B cell (primary cell): ENCODE measurements at regions of chr3 and their contacts with region 1.

Region 1: DNA sequence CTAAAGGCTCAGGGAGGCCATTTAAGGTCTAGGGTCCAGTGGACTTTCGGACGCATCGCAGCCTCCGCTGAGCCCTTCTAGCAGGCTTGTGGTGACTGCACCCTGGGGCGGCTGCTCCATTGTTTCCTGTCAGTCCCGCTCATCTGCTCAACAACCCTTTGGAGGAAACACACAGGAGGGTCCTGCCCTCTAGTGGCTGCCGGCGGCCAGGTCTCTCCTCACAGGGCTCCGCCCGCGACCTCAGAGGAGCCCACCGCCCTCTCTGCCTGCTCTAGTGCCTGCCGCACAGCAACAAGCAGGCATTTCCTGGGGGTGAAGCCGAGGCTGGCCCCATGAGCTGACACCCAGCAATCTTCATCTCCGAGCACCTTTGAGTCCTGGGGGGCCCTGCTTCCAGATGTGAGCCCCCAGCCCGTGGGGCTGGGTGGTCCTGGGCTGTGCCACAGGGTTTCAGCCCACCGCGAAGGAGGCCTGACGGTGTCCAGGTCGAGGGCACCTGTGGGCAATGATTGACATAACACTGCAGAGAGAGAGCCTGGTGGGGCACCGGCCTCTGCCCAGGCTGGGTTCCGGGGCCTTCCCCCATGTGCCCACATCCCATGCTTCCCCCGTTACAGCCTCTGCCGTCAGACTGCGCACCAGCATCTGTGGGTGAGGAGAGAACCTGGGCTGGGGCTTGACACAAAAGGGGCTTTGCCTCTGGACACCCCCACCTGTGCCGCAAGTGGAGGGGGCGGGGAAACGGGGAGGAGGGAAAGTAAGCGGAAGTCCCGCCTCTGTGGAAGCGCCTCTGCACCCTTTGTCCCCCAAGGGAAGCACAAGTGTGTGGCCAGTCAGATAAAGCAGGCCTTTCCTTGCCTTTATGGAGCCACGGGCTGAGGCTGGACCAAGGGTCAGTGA is 27.0 kb upstream of the SFMBT1 start:
- DNase-seq: peak; percentile 86
- ATAC-seq: peak; percentile 91
- H3K4me3 ChIP-seq: peak overlapping the region; percentile 50 to 91 (median 80)
- H3K4me3 Mint-ChIP-seq: peak overlapping the region; percentile 95
- H3K27ac ChIP-seq: peak overlapping the region; percentile 34 to 76
- H3K27ac Mint-ChIP-seq: peak overlapping the region; percentile 90
- H3K4me1 ChIP-seq: peaks cover 12 to 21% of the 10 kb centered on the region in 2 donors
- H3K4me1 Mint-ChIP-seq: peaks cover 17% of the 10 kb centered on the region
- H3K27me3 ChIP-seq: no peaks in the 10 kb centered on the region
- H3K27me3 Mint-ChIP-seq: no peaks in the 10 kb centered on the region
- CTCF ChIP-seq: peak; percentile 96

Region 2: DNA sequence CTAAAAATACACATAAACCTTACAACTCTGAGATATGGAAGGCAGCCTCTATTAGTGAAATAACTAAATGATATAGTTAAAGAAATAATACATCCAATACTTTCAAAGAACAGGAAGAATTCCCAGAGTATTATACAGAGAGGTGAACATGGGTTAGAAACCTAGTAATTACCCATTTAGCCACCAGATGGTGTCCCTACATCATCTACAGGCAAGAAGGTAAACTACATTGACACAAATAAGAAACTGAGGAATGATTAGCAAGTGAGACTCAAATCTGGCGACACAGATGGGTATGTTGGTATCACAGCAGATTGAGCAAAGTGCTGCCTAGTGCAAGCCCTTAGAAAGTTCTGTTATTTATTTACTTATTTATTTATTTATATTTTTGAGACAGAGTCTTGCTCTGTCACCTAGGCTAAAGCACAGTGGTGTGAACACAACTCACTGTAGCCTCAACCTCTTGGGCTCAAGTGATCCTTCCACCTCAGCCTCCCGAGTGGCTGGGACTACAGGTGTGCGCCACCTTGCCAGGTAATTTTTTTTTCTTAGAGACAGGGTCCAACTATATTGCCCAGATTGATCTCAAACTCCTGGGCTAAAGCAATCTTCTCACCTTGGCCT is 330.4 kb before region 1 on chr3:
- CTCF ChIA-PET with region 1: interaction called, 18 read pairs
- POLR2A ChIA-PET with region 1: no interaction called
- intact Hi-C with region 1: no loop called
- DNase-seq: peak; percentile 58
- ATAC-seq: no peak
- H3K4me3 ChIP-seq: no peak overlapping the region
- H3K4me3 Mint-ChIP-seq: no peak overlapping the region
- H3K27ac ChIP-seq: no peak overlapping the region
- H3K27ac Mint-ChIP-seq: no peak overlapping the region
- H3K4me1 ChIP-seq: no peaks in the 10 kb centered on the region
- H3K4me1 Mint-ChIP-seq: no peaks in the 10 kb centered on the region
- H3K27me3 ChIP-seq: no peaks in the 10 kb centered on the region
- H3K27me3 Mint-ChIP-seq: no peaks in the 10 kb centered on the region
- CTCF ChIP-seq: peak; percentile 77

Region 3: GRCh38 chr3:52845691-52846431 is 227.0 kb before region 1 on chr3:
- CTCF ChIA-PET with region 1: interaction called, 11 read pairs
- POLR2A ChIA-PET with region 1: interaction called, 4 read pairs
- intact Hi-C with region 1: loop called (anchors 1 kb)
- DNase-seq: peak; percentile 36
- ATAC-seq: peak; percentile 33
- H3K4me3 ChIP-seq: no peak overlapping the region
- H3K4me3 Mint-ChIP-seq: no peak overlapping the region
- H3K27ac ChIP-seq: no peak overlapping the region
- H3K27ac Mint-ChIP-seq: no peak overlapping the region
- H3K4me1 ChIP-seq: no peaks in the 10 kb centered on the region
- H3K4me1 Mint-ChIP-seq: no peaks in the 10 kb centered on the region
- H3K27me3 ChIP-seq: no peaks in the 10 kb centered on the region
- H3K27me3 Mint-ChIP-seq: no peaks in the 10 kb centered on the region
- CTCF ChIP-seq: peak; percentile 69

Region 4: DNA sequence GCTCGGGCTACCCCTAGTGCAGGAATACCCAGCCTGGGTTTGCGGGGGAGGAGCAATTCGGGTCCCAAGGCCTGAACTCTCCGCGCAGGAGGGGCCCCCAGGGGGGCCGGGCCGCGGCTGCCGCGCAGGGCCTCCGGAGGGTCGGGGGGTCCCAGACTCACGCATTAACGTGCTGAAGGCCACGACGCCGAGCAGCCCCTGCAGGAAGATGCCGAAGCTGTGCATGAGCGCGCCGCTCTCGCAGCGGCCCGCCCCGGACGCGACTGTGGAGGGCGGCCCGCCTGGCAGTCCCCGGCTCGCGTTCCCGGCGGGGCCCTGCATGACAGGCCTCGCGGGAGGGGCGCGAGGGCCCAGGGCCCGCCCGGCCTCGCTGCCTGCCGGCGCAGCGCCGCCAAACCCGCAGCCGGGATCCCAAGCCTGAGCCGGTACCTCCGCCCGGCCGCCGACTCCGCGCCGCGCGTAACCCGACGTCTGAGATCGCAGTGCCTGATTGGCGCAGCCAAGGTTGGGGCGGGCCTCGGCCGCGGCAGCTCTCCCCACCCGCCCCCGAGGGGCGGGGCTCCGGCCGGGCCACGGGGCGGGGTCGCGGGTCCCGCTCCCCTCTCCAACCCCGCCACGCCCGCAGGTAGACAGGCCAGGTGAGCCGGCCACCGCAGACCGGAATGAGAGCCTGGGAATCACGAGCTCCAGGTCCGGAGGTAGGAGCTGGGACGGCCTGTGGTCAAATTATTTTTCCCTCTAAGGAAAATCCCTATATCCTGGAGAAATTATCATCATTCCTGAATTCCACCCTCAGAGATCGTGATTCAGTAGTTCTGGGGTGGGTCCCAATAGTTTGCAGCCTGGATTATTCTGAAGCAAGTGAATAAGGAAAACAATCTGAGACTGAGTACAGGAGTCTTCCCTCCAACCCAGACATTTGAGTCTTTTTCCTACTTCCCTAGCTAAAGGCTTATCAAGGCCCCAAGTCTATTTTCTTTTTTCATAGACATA is 175.5 kb before region 1 on chr3 and contains the start of gene STIMATE:
- CTCF ChIA-PET with region 1: no interaction called
- POLR2A ChIA-PET with region 1: no interaction called
- intact Hi-C with region 1: loop called (anchors 1 kb)
- DNase-seq: peak; percentile 90
- ATAC-seq: peak; percentile 95
- H3K4me3 ChIP-seq: peak within 1 kb of the TSS; percentile 69 to 84 (median 78)
- H3K4me3 Mint-ChIP-seq: peak within 1 kb of the TSS; percentile 93
- H3K27ac ChIP-seq: peak within 1 kb of the TSS in 1 of 2 donors; percentile 52
- H3K27ac Mint-ChIP-seq: peak within 1 kb of the TSS; percentile 78
- H3K4me1 ChIP-seq: peaks cover 17 to 27% of the 10 kb centered on the region in 2 donors
- H3K4me1 Mint-ChIP-seq: peaks cover 48% of the 10 kb centered on the region
- H3K27me3 ChIP-seq: no peaks in the 10 kb centered on the region
- H3K27me3 Mint-ChIP-seq: no peaks in the 10 kb centered on the region
- CTCF ChIP-seq: no peak
- total RNA-seq, gene STIMATE: 37.7 and 38.4 TPM in 2 replicates

Region 5: DNA sequence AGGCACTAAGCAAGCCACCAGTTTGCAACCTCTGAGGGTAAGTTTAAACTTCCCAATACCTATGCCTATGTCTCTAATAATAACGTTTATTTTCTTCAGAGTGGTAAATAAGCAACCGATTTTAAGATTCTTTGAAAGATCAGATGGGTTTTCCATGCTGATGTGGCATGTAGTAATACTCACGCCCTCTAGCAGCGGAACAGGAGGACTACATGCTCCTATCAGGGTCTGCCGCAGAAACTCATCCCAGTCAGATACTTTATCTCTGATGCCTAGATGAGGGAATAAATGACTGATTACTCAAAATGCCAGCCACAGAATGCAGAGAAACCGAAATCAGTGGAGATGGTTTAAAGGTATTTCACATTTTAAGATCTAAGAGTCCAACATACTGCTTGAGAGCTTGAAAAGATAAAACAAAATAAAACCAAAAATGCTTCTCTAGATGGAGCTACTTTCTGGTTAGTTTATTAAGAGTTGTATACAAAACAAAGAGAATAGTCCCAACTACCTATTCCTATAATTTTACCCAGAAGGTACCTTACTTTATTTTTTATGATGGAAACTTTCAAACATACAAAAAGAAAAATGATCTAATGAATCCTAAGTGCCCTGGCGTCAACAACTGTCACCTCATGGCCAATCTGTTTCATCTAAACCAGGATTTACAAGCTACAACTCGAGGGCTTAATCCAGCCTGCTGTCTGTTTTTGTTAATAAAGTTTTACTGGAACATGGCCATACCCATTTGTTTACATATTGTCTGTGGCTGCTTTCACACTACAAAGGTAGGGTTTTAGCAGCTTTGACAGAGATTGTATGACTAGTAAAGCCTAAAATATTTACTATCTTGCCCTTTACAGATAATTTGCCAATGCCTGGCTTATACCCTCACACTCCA is 138.0 kb before region 1 on chr3:
- CTCF ChIA-PET with region 1: interaction called, 6 read pairs
- POLR2A ChIA-PET with region 1: no interaction called
- intact Hi-C with region 1: loop called (anchors 1 kb)
- DNase-seq: peak; percentile 69
- ATAC-seq: peak; percentile 87
- H3K4me3 ChIP-seq: no peak overlapping the region
- H3K4me3 Mint-ChIP-seq: no peak overlapping the region
- H3K27ac ChIP-seq: peak overlapping the region in 1 of 2 donors; percentile 50
- H3K27ac Mint-ChIP-seq: peak overlapping the region; percentile 53
- H3K4me1 ChIP-seq: peaks cover 19 to 20% of the 10 kb centered on the region in 2 donors
- H3K4me1 Mint-ChIP-seq: peaks cover 21% of the 10 kb centered on the region
- H3K27me3 ChIP-seq: no peaks in the 10 kb centered on the region
- H3K27me3 Mint-ChIP-seq: no peaks in the 10 kb centered on the region
- CTCF ChIP-seq: peak; percentile 83

Region 6: DNA sequence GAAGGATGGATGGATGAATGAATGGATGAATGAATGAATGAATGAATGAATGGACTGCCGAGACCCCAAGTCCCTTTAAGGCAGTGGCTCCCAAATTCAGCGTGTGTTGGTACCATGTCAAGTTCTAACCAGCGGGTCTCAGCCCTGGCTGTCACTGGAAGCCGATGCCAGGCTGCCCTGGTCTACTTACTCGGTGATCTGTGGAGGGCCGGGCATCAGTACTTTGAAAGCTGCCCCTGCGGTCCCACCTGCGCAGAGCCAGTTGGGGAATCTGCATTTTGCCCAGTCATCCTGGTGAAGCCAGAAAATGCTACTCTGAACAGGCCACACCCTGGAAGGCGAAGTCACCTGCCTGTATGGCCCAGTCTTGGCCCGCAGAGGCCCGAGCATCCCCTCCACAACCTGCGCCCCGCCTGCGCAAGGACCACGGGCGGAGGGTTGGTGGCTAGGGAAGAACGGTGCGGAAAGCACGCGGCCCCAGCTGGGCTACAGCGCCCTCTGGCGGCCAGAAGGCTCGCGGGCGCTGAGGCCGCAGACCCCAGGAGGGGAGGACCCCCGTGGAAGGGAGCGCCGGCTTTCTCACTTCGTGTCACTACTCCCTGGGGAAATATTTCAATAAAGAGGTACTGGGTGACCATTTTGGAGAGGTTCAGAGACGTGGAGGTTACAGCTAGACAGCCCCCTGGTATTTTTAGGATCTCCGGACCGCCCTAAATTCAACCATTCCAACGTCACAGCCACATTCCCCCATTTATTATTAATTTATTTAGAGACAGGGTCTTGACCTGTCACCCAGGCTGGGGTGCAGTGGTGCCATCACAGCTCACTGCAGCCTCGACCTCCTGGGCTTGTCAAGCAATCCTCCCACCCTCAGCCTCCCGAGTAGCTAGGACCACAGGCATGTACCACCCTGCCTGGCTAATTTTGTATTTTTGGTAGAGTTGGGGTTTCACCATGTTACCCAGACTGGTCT is 123.0 kb after region 1 on chr3:
- CTCF ChIA-PET with region 1: no interaction called
- POLR2A ChIA-PET with region 1: no interaction called
- intact Hi-C with region 1: loop called (anchors 1 kb)
- DNase-seq: peak; percentile 81
- ATAC-seq: peak; percentile 62
- H3K4me3 ChIP-seq: no peak overlapping the region
- H3K4me3 Mint-ChIP-seq: peak overlapping the region; percentile 21
- H3K27ac ChIP-seq: no peak overlapping the region
- H3K27ac Mint-ChIP-seq: no peak overlapping the region
- H3K4me1 ChIP-seq: peaks cover 26 to 56% of the 10 kb centered on the region in 2 donors
- H3K4me1 Mint-ChIP-seq: peaks cover 35% of the 10 kb centered on the region
- H3K27me3 ChIP-seq: no peaks in the 10 kb centered on the region
- H3K27me3 Mint-ChIP-seq: no peaks in the 10 kb centered on the region
- CTCF ChIP-seq: peak; percentile 99

Region 7: DNA sequence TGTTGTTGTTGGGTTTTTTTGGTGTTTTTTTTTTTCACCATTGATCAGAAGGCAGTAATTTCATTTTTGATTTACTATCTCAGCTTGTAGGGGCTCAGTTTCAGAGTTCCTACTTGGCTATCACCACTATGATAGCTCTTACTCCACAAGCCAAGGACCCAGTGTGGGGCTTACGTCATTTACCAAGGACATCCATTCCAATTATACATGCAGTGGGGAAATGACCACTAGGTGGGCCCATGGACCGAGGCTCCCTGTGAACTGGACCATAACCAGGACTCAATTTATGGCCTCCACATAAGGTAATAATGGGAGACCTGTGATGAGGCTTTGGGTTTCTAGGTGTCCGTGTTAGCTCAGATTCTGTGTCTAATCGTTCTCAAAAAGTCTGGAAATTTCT is 354.0 kb after region 1 on chr3:
- CTCF ChIA-PET with region 1: no interaction called
- POLR2A ChIA-PET with region 1: no interaction called
- intact Hi-C with region 1: no loop called
- DNase-seq: no peak
- ATAC-seq: no peak
- H3K4me3 ChIP-seq: no peak overlapping the region
- H3K4me3 Mint-ChIP-seq: no peak overlapping the region
- H3K27ac ChIP-seq: no peak overlapping the region
- H3K27ac Mint-ChIP-seq: no peak overlapping the region
- H3K4me1 ChIP-seq: peaks cover 22 to 25% of the 10 kb centered on the region in 2 donors
- H3K4me1 Mint-ChIP-seq: peaks cover 33% of the 10 kb centered on the region
- H3K27me3 ChIP-seq: no peaks in the 10 kb centered on the region
- H3K27me3 Mint-ChIP-seq: no peaks in the 10 kb centered on the region
- CTCF ChIP-seq: no peak